Right cardiac atrium (tissue), 5 donors: ENCODE measurements at regions of chr14 and their contacts with region 1.

Region 1: GRCh38 chr14:78566026-78566858 is 396.1 kb downstream of the NRXN3 start:
- DNase-seq: peak; percentile 69 to 87 (median 83)
- ATAC-seq: peak; percentile 93 to 97
- H3K4me3 ChIP-seq: peak overlapping the region; percentile 25
- H3K27ac ChIP-seq: no peak overlapping the region
- H3K4me1 ChIP-seq: no peaks in the 10 kb centered on the region
- H3K27me3 ChIP-seq: no peaks in the 10 kb centered on the region

Region 2: GRCh38 chr14:77862154-77862786 is 704.0 kb before region 1 on chr14:
- intact Hi-C with region 1: loop called in 3 of 4 experiments (anchors 5 kb)
- DNase-seq: peak; percentile 77 to 93 (median 91)
- ATAC-seq: peak; percentile 66 to 77
- H3K4me3 ChIP-seq: no peak overlapping the region
- H3K27ac ChIP-seq: no peak overlapping the region
- H3K4me1 ChIP-seq: no peaks in the 10 kb centered on the region
- H3K27me3 ChIP-seq: no peaks in the 10 kb centered on the region

Region 3: DNA sequence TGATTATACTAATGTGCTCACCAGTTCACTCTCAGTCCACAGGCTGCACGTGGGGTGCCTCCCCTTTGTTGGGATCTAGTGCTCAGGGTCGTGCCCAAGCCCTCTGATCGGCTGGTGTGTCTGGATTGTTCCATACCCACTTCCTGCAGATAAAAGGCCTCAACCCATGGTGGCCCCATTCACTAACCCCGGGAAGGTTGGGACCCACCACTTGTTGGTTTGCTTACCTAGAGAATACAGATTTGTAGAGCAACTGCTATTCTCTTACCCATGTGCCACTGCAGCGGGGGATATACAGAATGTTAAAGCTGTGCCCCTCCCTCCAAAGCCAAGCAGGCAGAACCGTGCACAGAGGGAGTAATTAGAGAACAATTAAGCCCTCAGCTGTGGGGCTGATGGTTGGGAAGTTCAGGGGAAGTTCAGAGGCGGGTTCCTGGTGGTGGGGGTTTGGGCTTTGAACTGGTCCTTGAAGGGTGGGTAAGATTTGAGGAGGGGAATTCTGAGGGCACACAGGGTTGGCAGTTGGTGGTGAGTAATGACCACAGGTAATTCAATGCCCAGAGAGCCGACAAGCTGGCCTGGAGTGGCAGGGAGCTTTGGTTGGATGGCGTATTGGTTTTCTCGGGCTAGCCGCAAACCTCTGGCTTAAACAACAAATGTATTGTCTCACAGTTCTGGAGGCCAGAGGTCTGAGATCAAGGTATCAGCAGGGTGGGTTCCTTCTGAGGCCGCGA is 697.5 kb before region 1 on chr14:
- intact Hi-C with region 1: loop called in 3 of 4 experiments (anchors 5 kb)
- DNase-seq: no peak
- ATAC-seq: no peak
- H3K4me3 ChIP-seq: no peak overlapping the region
- H3K27ac ChIP-seq: no peak overlapping the region
- H3K4me1 ChIP-seq: no peaks in the 10 kb centered on the region
- H3K27me3 ChIP-seq: no peaks in the 10 kb centered on the region

Region 4: DNA sequence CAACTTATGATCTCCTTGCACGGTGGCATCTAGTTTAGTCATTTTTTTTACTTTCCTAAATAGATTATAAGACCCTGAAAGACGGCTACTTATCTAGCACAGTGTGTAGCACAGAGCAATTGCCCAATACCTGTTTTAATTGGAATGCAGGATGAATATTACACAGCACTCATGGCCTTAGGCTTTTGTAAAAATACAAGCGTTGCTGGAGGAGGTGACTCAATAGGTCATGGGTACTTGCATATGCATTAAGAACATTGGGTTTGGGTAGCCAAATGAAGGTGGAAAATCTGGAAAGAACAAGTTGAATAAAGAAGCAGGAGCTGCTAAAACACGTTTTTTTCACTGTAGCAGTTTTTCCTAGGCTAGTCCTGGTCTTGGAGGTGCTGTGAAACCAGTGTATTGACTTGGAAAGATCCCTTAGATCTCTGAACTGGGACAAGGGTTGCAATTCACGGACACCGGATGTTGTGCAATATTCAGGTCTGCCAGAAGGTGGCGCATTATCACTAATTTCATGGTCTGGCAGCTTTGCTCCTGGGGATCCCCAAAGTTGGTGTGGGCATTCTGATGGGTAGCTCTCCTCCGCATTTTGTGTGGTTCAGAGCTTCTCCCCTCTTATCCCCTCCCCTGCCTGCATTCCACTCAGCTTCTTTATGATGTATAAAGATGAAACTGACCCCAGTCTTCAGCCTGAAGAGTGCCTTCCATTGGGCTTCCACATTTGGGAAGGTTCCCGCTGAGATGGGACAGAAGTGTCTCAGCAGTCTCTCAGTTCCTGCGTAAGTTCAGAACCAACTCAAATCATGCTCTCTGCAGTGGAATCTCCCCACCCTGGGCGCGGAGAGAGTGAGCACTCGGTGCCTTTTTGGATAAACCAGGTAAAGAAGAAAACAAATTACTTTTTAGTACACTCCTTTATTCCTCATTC is 117.8 kb before region 1 on chr14:
- intact Hi-C with region 1: loop called (anchors 5 to 10 kb)
- DNase-seq: peak in 2 of 3 donors; percentile 46 to 53
- ATAC-seq: no peak
- H3K4me3 ChIP-seq: no peak overlapping the region
- H3K27ac ChIP-seq: no peak overlapping the region
- H3K4me1 ChIP-seq: no peaks in the 10 kb centered on the region
- H3K27me3 ChIP-seq: no peaks in the 10 kb centered on the region

Region 5: DNA sequence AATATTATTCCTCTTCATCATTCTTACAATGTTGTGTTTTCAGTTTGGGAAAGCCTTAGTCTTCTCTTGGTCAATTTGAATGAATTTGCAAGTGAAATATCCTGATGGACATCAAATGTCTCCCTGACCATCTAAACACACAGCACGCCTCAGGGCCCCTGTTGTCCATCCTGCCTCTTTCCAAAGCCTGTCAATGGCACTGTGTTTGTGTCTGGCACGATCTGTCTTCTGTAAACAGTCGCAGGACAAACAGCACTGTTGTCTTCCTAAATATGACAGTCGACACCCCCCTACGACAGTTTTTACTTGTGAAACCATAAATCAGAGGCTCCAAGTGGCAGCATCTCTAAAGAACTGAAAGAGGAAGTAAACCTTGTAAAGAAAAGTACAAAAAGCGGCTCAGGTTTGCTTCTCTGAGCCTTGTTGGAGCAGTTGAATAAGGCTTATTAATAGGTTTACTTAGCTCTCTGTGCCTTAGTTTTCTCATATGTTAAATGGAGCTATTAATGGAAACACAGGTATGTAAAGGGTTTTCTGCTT is 110.3 kb before region 1 on chr14:
- intact Hi-C with region 1: loop called in 1 of 4 experiments (anchors 10 kb)
- DNase-seq: no peak
- ATAC-seq: no peak
- H3K4me3 ChIP-seq: no peak overlapping the region
- H3K27ac ChIP-seq: no peak overlapping the region
- H3K4me1 ChIP-seq: no peaks in the 10 kb centered on the region
- H3K27me3 ChIP-seq: no peaks in the 10 kb centered on the region

Region 6: DNA sequence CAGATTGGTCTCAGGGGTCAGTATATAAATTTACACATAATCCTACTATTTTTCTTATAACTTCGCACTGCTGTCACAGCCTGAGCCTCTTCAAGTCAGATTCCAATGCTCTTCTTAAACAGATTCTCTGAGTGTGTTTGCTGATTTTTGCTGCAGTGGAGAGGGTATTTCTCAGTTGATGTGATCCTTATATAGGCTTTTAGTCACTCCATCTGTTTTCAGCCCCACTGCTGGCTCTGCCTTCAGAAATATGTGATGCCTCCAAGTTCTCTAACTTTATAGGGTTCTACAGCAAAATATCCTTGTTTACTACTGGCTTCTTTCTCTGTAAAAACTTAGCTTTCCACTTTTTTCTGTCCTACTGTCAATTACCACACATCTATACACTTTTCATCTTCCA is 306.6 kb after region 1 on chr14:
- intact Hi-C with region 1: no loop called
- DNase-seq: no peak
- ATAC-seq: no peak
- H3K4me3 ChIP-seq: no peak overlapping the region
- H3K27ac ChIP-seq: no peak overlapping the region
- H3K4me1 ChIP-seq: no peaks in the 10 kb centered on the region
- H3K27me3 ChIP-seq: no peaks in the 10 kb centered on the region